ENCODE measurements at regions of chr14 and their contacts with region 1.

Region 1: DNA sequence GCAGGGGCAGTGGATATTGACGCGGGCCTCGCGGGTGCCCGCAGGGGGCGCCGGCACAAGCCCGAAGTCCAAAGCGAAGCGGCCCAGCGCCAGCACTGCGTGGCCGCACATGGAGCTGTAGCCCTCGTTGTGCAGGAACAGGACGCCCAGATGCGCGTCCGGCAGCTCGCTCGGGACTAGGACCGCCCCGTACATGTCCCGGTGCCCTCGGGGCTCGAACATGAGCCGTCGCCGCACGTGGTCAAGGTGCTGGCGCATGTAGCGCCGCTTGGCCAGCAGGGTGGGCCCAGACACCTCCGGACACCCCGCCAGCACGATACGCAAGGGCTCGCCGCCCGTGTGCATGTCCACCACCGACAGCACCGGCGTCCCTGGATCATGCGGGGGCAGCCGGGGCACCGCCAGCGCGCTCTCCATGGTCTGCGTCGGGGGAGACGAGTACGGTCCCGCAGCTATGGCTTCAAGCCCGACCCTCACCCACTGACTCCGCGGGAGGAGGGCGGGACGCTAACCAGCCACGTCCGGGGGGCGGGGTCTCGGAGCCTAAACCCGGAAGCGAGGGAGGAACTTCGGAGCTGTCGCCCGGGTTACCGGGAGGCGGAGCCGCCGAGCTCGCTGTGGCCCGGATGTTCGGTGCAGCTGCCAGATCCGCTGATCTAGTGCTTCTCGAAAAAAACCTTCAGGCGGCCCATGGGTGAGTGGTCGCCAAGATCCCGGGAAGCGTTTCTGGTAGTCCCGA is at the starts of genes JKAMP and L3HYPDH:
- DNase-seq: peak; percentile 96
- ATAC-seq: peak; percentile 92
- H3K4me3 Mint-ChIP-seq: peak within 1 kb of the TSS; percentile 98
- H3K27ac Mint-ChIP-seq: peak within 1 kb of the TSS; percentile 96
- H3K4me1 Mint-ChIP-seq: peaks cover 52% of the 10 kb centered on the region
- H3K27me3 Mint-ChIP-seq: no peaks in the 10 kb centered on the region
- CTCF ChIP-seq: no peak
- total RNA-seq, gene JKAMP: 18.1 and 28.8 TPM in 2 replicates
- total RNA-seq, gene L3HYPDH: 22.1 and 30.2 TPM in 2 replicates

Region 2: DNA sequence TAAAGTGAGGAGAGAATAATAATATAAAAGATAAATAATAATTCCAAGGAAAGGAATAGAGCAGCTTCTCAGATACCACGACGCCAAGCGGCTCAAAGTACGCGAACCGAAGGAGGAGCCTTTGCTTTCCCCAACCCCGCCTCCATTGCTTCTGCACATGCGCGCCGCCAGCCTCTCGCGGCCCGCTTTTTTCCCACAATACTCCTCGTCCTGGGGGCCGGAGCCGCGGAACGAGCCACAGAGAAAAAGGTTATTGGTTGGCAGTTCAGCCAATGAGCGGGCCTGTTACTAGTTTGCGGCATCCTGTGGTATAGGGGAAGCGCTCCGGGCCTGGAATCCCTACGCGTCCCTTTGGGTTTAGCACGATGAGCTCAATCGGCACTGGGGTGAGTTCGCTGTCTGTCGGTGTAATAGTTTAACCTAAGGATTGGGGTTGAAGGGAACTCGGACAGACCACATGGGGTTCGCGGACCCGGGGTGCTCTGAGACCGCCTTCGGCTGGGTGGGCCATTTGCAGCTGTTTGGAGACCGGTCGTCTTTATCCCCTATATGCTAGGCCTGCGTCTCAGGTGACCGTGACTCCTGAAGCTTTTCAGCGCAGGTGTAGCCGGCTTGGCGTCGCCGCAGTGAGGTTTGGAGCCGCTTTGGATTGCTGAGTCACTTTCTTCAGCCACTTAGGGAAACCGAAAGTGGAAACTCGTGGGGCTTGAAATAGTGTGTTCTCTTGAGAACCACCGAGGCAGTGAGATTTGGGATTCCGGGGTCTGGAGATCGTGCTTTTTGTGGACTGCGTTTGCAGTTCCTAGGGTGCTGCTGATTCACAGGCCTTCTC is 1239.3 kb before region 1 on chr14 and contains the start of gene PSMA3:
- CTCF ChIA-PET with region 1: no interaction called
- POLR2A ChIA-PET with region 1: no interaction called
- intact Hi-C with region 1: loop called (anchors 10 kb)
- DNase-seq: peak; percentile 94
- ATAC-seq: peak; percentile 91
- H3K4me3 Mint-ChIP-seq: peak within 1 kb of the TSS; percentile 98
- H3K27ac Mint-ChIP-seq: peak within 1 kb of the TSS; percentile 98
- H3K4me1 Mint-ChIP-seq: peaks cover 51% of the 10 kb centered on the region
- H3K27me3 Mint-ChIP-seq: peaks cover 1% of the 10 kb centered on the region
- CTCF ChIP-seq: no peak
- total RNA-seq, gene PSMA3: 204 and 208 TPM in 2 replicates

Region 3: DNA sequence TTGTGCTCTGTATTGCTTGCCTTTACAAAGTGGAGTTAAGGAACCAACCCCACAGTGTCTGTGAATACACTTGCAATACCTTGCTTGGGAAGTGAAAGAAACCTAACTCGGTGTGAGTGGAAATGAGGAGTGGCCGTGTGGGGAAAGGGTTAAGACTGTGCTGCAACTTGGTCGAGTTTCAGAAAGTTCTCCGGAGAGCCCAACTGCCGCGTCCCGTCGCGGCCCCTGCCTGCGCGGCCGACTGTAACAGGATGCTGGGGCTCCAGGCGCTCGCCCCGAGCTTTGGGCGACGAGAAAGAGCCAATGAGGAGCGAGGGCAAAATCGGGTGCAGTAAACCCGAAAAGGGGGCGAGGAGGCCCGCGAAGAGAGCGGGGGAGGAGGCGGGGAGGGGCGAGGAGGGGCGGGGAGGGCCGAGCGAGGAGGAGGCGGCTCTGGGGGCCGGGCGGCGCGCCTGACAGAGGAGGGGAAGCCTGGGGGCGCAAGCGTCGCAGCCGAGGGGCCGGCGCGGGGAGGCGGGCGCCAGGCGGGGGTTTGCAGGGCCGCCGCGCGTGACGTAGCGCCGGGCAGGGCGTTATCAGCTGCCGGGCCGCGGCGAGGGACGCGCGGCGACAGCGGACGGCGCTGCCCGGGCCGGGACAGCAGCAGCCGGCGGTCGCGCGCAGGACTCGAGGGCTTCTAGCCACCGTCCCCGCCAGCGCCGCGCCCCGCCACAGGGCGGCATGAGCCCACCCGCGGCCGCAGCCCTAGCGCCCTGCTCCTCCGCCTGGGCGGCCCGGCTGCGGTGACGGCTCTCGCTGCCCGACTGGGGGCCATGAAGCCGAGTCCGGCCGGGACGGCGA is 846.5 kb before region 1 on chr14 and contains the start of gene DACT1:
- CTCF ChIA-PET with region 1: no interaction called
- POLR2A ChIA-PET with region 1: no interaction called
- intact Hi-C with region 1: loop called (anchors 5 kb)
- DNase-seq: peak; percentile 52
- ATAC-seq: peak; percentile 80
- H3K4me3 Mint-ChIP-seq: peak within 1 kb of the TSS; percentile 94
- H3K27ac Mint-ChIP-seq: peak within 1 kb of the TSS; percentile 90
- H3K4me1 Mint-ChIP-seq: peaks cover 46% of the 10 kb centered on the region
- H3K27me3 Mint-ChIP-seq: peaks cover 17% of the 10 kb centered on the region
- CTCF ChIP-seq: no peak
- total RNA-seq, gene DACT1: 3.0 and 3.5 TPM in 2 replicates

Region 4: DNA sequence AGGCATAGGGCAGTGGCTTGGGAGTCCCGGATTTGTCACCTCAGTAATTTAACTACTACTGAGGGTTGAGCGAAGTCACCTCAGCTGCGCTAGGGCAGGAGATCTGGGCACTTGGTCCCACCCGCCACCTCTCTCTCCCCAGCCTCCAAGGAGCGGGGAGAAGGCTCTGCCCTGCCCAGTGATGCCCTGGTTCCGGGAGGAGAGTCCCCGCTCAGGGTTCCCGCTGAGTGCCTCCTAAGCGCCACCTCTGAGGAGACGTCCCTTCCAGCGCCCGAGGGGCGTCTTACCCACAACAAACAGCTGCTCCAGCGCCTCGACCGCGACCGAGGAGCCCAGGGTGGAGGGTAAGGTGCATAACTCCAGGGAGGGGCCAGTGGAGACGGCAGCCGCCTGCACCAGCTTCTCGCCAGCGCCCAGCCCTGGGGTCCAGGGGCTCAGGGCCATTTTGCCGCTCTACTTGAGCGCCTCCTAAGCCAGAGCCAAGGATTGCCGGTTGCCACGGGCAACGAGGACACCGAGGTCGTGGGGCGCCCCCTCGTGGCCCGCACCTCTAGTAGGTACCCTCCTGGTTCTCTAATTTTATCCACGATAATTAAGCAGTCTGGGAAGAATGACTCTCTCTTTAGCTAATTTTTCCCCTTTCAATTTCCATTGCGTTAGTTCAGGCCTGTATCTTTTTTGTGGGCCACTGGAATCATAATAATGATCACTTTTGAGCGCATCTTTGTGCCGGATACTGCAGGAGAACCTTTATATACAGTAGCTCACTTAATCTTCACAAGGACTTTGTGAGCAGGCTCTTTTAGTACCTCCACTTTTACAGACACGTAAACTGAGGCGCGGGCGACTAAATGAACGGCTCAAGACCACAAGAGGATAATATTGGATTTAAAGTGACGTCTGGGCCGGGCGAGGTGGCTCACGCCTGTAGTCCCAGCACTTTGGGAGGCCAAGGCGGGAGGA is 92.5 kb after region 1 on chr14 and contains the start of gene CCDC175:
- CTCF ChIA-PET with region 1: interaction called, 5 read pairs
- POLR2A ChIA-PET with region 1: no interaction called
- intact Hi-C with region 1: loop called (anchors 2 kb)
- DNase-seq: peak; percentile 68
- ATAC-seq: peak; percentile 94
- H3K4me3 Mint-ChIP-seq: peak within 1 kb of the TSS; percentile 70
- H3K27ac Mint-ChIP-seq: no peak within 1 kb of the TSS
- H3K4me1 Mint-ChIP-seq: peaks cover 8% of the 10 kb centered on the region
- H3K27me3 Mint-ChIP-seq: peaks cover 11% of the 10 kb centered on the region
- CTCF ChIP-seq: no peak
- total RNA-seq, gene CCDC175: not detected in 2 replicates

Region 5: DNA sequence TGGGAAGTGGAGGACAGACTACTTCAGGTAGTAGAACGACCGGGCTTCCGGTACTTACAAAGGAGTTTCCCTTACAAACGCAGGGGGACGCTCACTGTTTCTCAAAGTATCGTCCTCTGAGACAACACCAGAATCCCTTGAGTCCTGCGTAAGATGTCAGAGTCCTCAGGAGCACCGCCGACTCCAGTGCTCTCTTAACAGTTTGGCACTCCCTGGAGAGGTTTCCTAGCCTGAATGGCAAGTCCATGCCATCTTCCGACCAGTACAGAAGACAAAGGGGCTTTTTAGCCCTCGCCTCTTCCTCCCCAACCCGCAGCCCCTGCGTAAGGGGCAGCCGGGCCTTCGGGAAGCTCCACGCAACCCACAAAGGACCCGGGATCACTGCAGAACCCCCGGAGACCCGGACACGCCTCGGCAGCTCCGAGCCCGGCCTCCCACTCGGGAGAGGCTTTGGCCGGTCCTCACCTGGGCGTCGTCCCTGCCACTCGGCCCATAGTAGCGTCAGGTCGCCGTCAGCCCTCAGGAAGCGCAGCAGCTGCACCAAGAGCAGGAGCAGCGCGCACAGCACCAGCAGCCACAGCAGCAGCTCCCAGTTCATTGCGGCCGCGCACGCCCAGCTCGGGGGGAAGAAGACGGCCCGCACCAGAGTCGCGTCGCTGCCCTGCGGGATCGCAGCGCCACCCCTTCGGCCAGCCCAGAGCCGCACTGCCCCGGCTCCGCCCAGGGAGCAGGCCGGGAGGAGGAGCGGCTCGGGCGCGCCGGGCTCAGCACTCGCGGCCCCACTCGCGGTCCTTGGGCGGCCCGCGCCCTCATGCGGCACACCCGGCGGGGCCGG is 680.9 kb after region 1 on chr14 and contains the start of gene DHRS7:
- CTCF ChIA-PET with region 1: interaction called, 3 read pairs
- POLR2A ChIA-PET with region 1: interaction called, 5 read pairs
- intact Hi-C with region 1: loop called (anchors 5 kb)
- DNase-seq: peak; percentile 70
- ATAC-seq: peak; percentile 88
- H3K4me3 Mint-ChIP-seq: peak within 1 kb of the TSS; percentile 99
- H3K27ac Mint-ChIP-seq: peak within 1 kb of the TSS; percentile 99
- H3K4me1 Mint-ChIP-seq: peaks cover 39% of the 10 kb centered on the region
- H3K27me3 Mint-ChIP-seq: no peaks in the 10 kb centered on the region
- CTCF ChIP-seq: no peak
- total RNA-seq, gene DHRS7: 41.5 and 47.1 TPM in 2 replicates

Region 6: DNA sequence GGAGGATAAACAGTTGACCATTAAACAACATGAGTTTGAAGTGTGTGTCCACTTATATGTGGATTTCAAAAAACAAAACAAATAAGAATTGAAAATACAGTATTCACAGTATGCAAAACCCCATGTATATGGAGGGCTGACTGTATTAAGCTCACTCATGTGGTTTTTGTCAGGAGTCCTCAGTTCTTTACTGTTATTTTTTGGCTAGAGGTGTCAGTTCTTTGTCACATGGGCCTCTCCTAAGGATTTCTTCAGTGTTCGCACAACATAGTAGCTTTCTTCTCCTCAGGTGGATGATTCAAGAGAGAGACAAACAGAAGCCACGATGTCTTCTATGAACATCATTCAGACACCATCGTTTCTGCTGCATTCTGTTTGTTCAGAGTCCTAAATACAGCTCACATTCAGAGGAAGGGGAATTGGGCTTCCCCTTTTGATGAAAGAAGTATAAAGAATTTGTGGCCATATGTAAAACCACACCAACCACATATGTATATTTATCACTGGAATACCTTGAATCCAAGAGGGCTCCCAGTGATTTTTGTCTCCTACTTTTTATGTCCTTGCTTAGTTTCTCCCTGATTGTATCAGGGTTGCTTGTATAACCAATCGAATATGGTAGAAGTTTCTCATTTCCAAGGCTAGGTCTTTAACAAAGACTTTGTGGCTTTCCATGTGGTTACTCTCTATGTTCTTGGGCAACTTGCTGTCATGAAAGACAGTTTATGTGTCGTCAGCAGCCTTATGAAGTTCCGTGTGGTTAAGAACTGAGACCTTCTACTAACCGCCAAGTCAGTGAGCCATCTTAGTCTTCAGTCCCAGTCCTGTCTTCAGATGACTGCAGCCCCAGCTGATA is 1269.4 kb after region 1 on chr14:
- CTCF ChIA-PET with region 1: no interaction called
- POLR2A ChIA-PET with region 1: no interaction called
- intact Hi-C with region 1: loop called (anchors 10 kb)
- DNase-seq: no peak
- ATAC-seq: peak; percentile 95
- H3K4me3 Mint-ChIP-seq: peak overlapping the region; percentile 52
- H3K27ac Mint-ChIP-seq: peak overlapping the region; percentile 81
- H3K4me1 Mint-ChIP-seq: peaks cover 42% of the 10 kb centered on the region
- H3K27me3 Mint-ChIP-seq: no peaks in the 10 kb centered on the region
- CTCF ChIP-seq: no peak